Ascending aorta (tissue), 2 donors: ENCODE measurements at regions of chr7 and their contacts with region 1.

Region 1: DNA sequence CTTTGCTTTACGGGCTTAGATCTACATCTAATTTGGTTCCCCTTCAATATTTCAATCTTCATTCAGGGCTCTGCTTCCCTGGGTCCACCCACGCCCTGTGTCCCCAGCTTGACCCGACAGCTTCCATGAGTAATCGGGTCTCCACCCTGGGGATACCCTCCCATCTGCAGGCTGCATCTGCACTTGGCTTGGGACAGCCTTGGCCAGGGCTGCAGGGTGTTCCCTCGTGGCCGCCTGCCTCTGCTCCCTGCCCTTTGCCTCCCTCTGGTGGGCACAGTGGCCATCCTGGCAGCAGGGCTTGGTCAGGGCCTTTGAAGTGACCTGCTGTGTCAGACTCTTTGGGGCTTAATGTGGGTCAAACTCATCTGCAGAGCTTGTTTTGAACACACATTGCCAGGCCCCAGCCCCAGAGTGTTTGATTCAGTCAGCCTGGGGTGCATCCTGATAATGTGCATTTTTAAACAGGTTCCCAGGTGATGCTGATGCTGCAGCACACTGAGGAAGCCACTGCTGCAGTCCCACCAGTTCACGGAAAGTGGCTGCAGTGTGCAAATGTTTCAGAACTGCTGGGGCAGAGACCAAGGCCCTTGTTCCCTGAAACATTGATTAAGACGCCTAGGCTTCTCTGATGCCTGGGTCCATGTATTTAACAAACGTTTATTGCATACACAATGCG is 80.7 kb upstream of the SEC61G start:
- DNase-seq: peak in 1 of 2 donors; percentile 84
- H3K4me3 ChIP-seq: no peak overlapping the region
- H3K27ac ChIP-seq: no peak overlapping the region
- H3K4me1 ChIP-seq: peaks cover 0 to 30% of the 10 kb centered on the region in 2 donors
- H3K27me3 ChIP-seq: no peaks in the 10 kb centered on the region
- CTCF ChIP-seq: peak; percentile 56 to 70 (median 68)

Region 2: GRCh38 chr7:54773472-54774399 is 65.9 kb before region 1 on chr7:
- intact Hi-C with region 1: loop called (anchors 1 kb)
- DNase-seq: peak in 1 of 2 donors; percentile 88
- H3K4me3 ChIP-seq: peak overlapping the region; percentile 41 to 57
- H3K27ac ChIP-seq: no peak overlapping the region
- H3K4me1 ChIP-seq: peaks cover 0 to 3% of the 10 kb centered on the region in 2 donors
- H3K27me3 ChIP-seq: no peaks in the 10 kb centered on the region
- CTCF ChIP-seq: peak; percentile 72 to 87 (median 83)

Region 3: DNA sequence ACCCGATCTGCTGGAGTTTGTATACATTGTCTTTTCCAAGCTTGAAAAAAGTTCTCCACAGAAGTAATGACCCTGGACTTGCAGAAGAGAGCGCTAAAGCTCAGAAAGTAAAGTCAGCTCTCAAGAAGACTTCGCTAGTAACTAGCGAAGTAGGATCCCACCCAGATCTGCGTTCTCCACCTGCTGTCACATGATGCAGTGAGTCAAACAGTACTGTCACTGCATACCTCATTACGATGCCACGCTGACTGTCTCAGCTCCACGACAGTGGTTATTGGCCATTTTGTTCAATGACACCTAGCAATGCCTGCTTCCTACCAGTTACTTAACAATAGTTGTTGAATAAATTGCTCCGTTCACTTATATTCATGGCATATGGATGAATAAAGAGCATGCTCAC is 51.0 kb before region 1 on chr7:
- intact Hi-C with region 1: loop called (anchors 1 kb)
- DNase-seq: no peak
- H3K4me3 ChIP-seq: no peak overlapping the region
- H3K27ac ChIP-seq: no peak overlapping the region
- H3K4me1 ChIP-seq: no peaks in the 10 kb centered on the region
- H3K27me3 ChIP-seq: no peaks in the 10 kb centered on the region
- CTCF ChIP-seq: peak; percentile 55 to 82 (median 66)

Region 4: GRCh38 chr7:54969190-54969971 is 129.7 kb after region 1 on chr7:
- intact Hi-C with region 1: no loop called
- DNase-seq: no peak
- H3K4me3 ChIP-seq: no peak overlapping the region
- H3K27ac ChIP-seq: no peak overlapping the region
- H3K4me1 ChIP-seq: no peaks in the 10 kb centered on the region
- H3K27me3 ChIP-seq: no peaks in the 10 kb centered on the region
- CTCF ChIP-seq: no peak